ENCODE measurements at regions of chr12 and their contacts with region 1.

Region 1: GRCh38 chr12:5745265-5745888 is 199.7 kb downstream of the ANO2 start:
- DNase-seq: peak; percentile 82
- ATAC-seq: peak; percentile 79
- H3K4me3 Mint-ChIP-seq: no peak overlapping the region
- H3K27ac Mint-ChIP-seq: no peak overlapping the region
- H3K4me1 Mint-ChIP-seq: peaks cover 23% of the 10 kb centered on the region
- H3K27me3 Mint-ChIP-seq: no peaks in the 10 kb centered on the region
- CTCF ChIP-seq: peak; percentile 88

Region 2: GRCh38 chr12:5756338-5756842 is 11.0 kb after region 1 on chr12:
- CTCF ChIA-PET with region 1: interaction called, 18 read pairs
- POLR2A ChIA-PET with region 1: no interaction called
- intact Hi-C with region 1: no loop called
- DNase-seq: no peak
- ATAC-seq: no peak
- H3K4me3 Mint-ChIP-seq: no peak overlapping the region
- H3K27ac Mint-ChIP-seq: no peak overlapping the region
- H3K4me1 Mint-ChIP-seq: no peaks in the 10 kb centered on the region
- H3K27me3 Mint-ChIP-seq: peaks cover 8% of the 10 kb centered on the region
- CTCF ChIP-seq: no peak

Region 3: DNA sequence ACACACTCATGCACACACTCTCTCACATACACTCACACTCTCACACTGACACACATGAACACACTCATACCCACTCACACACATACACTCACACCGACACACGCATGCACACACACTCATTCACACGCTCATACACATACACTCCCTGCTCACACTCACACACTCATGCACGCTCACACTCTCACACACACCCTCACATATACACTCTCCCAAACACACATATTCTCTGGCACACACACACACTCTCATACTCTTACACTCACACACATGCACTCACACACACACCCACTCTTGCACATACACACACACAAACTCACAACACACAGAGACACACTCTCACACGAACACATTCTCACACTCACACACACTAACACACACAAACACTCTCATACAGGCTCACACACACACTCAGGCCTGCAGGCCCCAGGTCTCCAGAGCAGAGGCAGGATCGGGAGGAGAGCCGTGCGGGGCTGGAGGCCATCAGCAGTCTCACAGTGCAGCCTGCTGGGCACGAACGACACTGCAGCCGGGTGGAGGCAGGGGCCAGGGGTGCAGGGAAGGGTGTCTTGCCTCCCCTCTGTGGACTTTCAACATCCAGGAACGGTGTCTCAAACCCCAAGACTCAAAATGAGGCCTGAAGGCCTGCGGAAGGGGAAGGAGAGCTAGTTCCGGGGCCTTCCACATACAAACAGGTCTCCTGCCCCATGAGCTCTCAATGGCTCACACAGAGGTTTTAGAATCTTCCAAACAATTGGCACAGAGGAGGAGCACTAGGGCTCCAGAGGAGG is 51.0 kb after region 1 on chr12:
- CTCF ChIA-PET with region 1: interaction called, 29 read pairs
- POLR2A ChIA-PET with region 1: interaction called, 3 read pairs
- intact Hi-C with region 1: no loop called
- DNase-seq: peak; percentile 46
- ATAC-seq: peak; percentile 64
- H3K4me3 Mint-ChIP-seq: no peak overlapping the region
- H3K27ac Mint-ChIP-seq: no peak overlapping the region
- H3K4me1 Mint-ChIP-seq: no peaks in the 10 kb centered on the region
- H3K27me3 Mint-ChIP-seq: no peaks in the 10 kb centered on the region
- CTCF ChIP-seq: peak; percentile 61

Region 4: GRCh38 chr12:6020926-6021325 is 275.5 kb after region 1 on chr12:
- CTCF ChIA-PET with region 1: no interaction called
- POLR2A ChIA-PET with region 1: no interaction called
- intact Hi-C with region 1: no loop called
- DNase-seq: no peak
- ATAC-seq: no peak
- H3K4me3 Mint-ChIP-seq: no peak overlapping the region
- H3K27ac Mint-ChIP-seq: no peak overlapping the region
- H3K4me1 Mint-ChIP-seq: no peaks in the 10 kb centered on the region
- H3K27me3 Mint-ChIP-seq: peaks cover 5% of the 10 kb centered on the region
- CTCF ChIP-seq: no peak

Measured in activated CD8-positive, alpha-beta T cell treated with anti-CD3 and anti-CD28 coated beads for 36 hours (primary cell).